Tibial artery (tissue), 4 donors: ENCODE measurements at regions of chr16 and their contacts with region 1.

Region 1: GRCh38 chr16:28553776-28554633 is at the start of gene SGF29:
- DNase-seq: peak; percentile 91 to 96
- H3K4me3 ChIP-seq: peak within 1 kb of the TSS; percentile 62 to 73
- H3K27ac ChIP-seq: peak within 1 kb of the TSS; percentile 92 to 96
- H3K4me1 ChIP-seq: peaks cover 0 to 20% (median 14%) of the 10 kb centered on the region in 4 donors
- H3K27me3 ChIP-seq: no peaks in the 10 kb centered on the region
- CTCF ChIP-seq: peak; percentile 29 to 33

Region 2: DNA sequence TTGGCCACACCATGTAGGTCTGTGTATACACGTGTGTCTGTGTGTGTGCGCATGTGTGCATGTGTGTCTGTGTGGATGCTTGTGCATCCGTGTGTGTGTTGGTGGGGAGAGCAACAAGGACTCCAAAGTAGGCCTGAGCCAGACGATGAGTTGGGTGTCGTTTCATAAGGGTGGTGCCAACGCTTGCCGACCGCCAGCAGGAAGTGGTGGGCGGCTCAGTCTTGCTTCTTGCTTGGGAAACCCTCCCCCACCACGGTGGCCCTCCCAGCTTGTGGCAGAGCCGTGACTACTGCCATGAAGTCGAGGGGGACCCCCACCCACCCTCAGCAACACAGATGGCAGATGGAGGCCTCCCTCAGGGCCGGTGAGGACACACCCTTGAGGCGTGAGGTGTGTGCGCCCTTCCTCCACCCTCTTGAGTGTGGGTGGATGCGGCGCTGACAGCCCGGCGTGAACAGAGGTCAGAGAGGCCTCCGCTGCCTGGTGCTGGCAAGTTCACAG is 244.1 kb before region 1 on chr16:
- intact Hi-C with region 1: no loop called
- DNase-seq: no peak
- H3K4me3 ChIP-seq: no peak overlapping the region
- H3K27ac ChIP-seq: no peak overlapping the region
- H3K4me1 ChIP-seq: no peaks in the 10 kb centered on the region
- H3K27me3 ChIP-seq: peaks cover 0 to 13% of the 10 kb centered on the region in 2 donors
- CTCF ChIP-seq: no peak

Region 3: GRCh38 chr16:28486266-28486665 is 67.7 kb before region 1 on chr16:
- intact Hi-C with region 1: loop called (anchors 2 kb)
- DNase-seq: no peak
- H3K4me3 ChIP-seq: no peak overlapping the region
- H3K27ac ChIP-seq: no peak overlapping the region
- H3K4me1 ChIP-seq: peaks cover 0 to 16% (median 8%) of the 10 kb centered on the region in 4 donors
- H3K27me3 ChIP-seq: no peaks in the 10 kb centered on the region
- CTCF ChIP-seq: no peak

Region 4: GRCh38 chr16:28823872-28824716 is 270.1 kb after region 1 on chr16:
- intact Hi-C with region 1: loop called (anchors 10 kb)
- DNase-seq: peak; percentile 97 to 99
- H3K4me3 ChIP-seq: peak overlapping the region; percentile 89 to 99
- H3K27ac ChIP-seq: peak overlapping the region; percentile 99 to 100
- H3K4me1 ChIP-seq: peaks cover 0 to 32% (median 23%) of the 10 kb centered on the region in 4 donors
- H3K27me3 ChIP-seq: no peaks in the 10 kb centered on the region
- CTCF ChIP-seq: peak; percentile 38 to 41